Psoas muscle (tissue), 8 donors: ENCODE measurements at regions of chr9 and their contacts with region 1.

Region 1: GRCh38 chr9:106726070-106726815 is 136.7 kb upstream of the ZNF462 start:
- DNase-seq: peak in 1 of 2 donors; percentile 10
- ATAC-seq: peak; percentile 85 to 96 (median 94)
- H3K4me3 ChIP-seq: no peak overlapping the region
- H3K27ac ChIP-seq: peak overlapping the region; percentile 87
- H3K4me1 ChIP-seq: peaks cover 29% of the 10 kb centered on the region
- H3K27me3 ChIP-seq: no peaks in the 10 kb centered on the region
- CTCF ChIP-seq: no peak

Region 2: GRCh38 chr9:106675745-106676144 is 50.5 kb before region 1 on chr9:
- intact Hi-C with region 1: no loop called
- DNase-seq: peak; percentile 59 to 79
- ATAC-seq: peak; percentile 97 to 100 (median 99)
- H3K4me3 ChIP-seq: no peak overlapping the region
- H3K27ac ChIP-seq: peak overlapping the region; percentile 73
- H3K4me1 ChIP-seq: peaks cover 6% of the 10 kb centered on the region
- H3K27me3 ChIP-seq: no peaks in the 10 kb centered on the region
- CTCF ChIP-seq: no peak

Region 3: DNA sequence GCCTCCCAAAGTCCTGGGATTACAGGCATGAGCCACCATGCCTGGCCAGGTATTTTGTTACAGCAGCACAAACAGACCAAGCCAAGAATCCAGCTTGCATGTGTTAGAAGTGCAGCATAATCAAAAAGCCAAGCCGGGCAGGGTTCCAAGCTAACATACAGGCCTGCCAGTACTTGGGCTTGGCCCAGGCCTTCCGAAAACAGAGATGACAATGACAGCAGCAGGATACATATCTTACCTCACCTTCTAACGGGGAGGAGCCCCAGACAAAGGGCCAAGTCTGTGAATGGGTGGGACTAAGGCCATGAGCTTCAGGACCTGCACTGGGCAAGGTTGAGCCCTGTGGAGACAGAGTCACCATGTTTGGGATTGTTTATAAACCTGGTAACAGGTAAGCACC is 45.4 kb after region 1 on chr9:
- intact Hi-C with region 1: loop called in 1 of 2 experiments (anchors 10 kb)
- DNase-seq: peak; percentile 73 to 84
- ATAC-seq: peak; percentile 88 to 96 (median 94)
- H3K4me3 ChIP-seq: peak overlapping the region; percentile 47
- H3K27ac ChIP-seq: peak overlapping the region; percentile 90
- H3K4me1 ChIP-seq: peaks cover 30% of the 10 kb centered on the region
- H3K27me3 ChIP-seq: no peaks in the 10 kb centered on the region
- CTCF ChIP-seq: no peak